ENCODE measurements at regions of chr17 and their contacts with region 1.

Region 1: DNA sequence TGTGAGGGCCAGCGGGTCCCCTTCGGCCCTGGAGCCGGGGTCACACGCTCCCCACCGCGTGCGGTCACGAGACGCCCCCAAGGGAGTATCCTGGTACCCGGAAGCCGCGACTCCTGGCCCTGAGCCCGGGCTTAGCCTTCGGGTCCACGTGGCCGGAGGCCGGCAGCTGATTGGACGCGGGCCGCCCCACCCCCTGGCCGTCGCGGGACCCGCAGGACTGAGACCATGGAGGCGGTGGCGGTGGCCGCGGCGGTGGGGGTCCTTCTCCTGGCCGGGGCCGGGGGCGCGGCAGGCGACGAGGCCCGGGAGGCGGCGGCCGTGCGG is at the start of gene NAGLU:
- DNase-seq: peak; percentile 55 to 87 (median 73)
- ATAC-seq: peak; percentile 75 to 79
- H3K4me3 Mint-ChIP-seq: peak within 1 kb of the TSS; percentile 77 to 91 (median 86)
- H3K27ac Mint-ChIP-seq: peak within 1 kb of the TSS; percentile 45 to 91 (median 83)
- H3K4me1 Mint-ChIP-seq: peaks cover 18 to 55% (median 50%) of the 10 kb centered on the region in 4 donors
- H3K27me3 Mint-ChIP-seq: no peaks in the 10 kb centered on the region
- polyA plus RNA-seq, gene NAGLU: 8.0 to 16.2 (median 13.4) TPM

Region 2: GRCh38 chr17:42548070-42548837 is 12.2 kb after region 1 on chr17:
- POLR2A ChIA-PET with region 1: interaction called, 16 read pairs
- DNase-seq: peak; percentile 42 to 87 (median 74)
- ATAC-seq: peak; percentile 90 to 97
- H3K4me3 Mint-ChIP-seq: peak overlapping the region; percentile 33 to 72 (median 50)
- H3K27ac Mint-ChIP-seq: peak overlapping the region in 3 of 10 donors; percentile 6 to 34 (median 7)
- H3K4me1 Mint-ChIP-seq: peaks cover 9 to 32% (median 21%) of the 10 kb centered on the region in 4 donors
- H3K27me3 Mint-ChIP-seq: no peaks in the 10 kb centered on the region

Region 3: DNA sequence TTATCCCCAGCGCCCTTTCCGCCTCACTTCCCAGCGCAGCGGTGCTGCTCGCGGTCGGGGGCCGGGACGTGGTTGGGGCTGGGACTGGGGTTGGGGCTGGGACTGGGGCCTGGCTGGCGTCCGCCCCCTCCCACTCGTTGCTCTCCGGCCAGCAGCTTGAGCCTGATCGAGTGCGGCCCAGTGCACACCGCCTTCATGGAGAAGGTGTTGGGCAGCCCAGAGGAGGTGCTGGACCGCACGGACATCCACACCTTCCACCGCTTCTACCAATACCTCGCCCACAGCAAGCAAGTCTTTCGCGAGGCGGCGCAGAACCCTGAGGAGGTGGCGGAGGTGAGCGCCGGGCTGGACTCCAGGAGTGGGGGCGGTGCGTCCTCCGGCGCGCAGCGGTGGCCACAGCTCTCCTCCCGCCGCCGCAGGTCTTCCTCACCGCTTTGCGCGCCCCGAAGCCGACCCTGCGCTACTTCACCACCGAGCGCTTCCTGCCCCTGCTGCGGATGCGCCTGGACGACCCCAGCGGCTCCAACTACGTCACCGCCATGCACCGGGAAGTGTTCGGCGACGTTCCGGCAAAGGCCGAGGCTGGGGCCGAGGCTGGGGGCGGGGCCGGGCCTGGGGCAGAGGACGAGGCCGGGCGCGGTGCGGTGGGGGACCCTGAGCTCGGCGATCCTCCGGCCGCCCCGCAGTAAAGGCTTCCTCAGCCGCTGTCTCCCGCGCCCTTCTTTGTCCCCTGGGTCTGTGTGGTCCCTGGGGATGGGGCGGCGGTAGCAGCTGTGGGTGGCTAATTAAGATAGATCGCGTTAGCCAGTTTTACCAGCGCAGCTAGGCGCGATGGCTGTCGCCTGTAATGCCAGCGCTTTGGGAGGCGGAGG is 18.5 kb after region 1 on chr17:
- POLR2A ChIA-PET with region 1: interaction called, 12 read pairs
- DNase-seq: peak; percentile 61 to 88 (median 74)
- ATAC-seq: peak; percentile 91 to 93
- H3K4me3 Mint-ChIP-seq: peak overlapping the region; percentile 84 to 95 (median 92)
- H3K27ac Mint-ChIP-seq: peak overlapping the region; percentile 83 to 96 (median 94)
- H3K4me1 Mint-ChIP-seq: peaks cover 11 to 51% (median 33%) of the 10 kb centered on the region in 4 donors
- H3K27me3 Mint-ChIP-seq: no peaks in the 10 kb centered on the region

Region 4: DNA sequence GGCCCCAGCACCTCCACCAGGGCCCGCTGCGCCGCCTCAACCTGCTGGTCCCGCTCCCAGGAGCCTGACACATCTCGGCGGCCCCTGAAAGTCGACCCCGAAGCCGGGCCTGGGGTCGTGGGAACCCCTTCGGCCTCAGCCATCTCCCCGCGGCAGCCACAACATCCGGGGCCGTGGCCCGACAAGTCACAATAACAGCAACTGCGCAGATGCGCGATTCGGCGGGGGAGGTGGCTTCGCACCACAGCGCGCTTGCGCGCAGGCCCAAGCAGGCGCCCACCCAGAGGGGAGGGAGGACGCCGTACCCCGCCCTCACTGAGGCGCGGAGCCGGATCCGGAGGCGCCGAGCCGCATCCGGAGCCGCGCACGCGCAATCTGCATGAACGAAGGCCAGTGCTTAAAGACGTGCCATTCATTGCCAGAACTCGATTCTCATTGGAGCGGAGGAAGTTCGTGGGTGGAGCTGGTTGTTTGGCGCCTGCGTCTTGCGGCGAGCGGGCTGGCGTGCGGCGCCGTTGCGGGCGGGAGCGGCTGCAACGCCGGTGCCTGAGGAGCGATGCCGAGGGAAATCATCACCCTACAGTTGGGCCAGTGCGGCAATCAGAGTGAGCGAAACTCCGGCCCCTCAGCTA is 73.3 kb after region 1 on chr17 and contains the starts of genes RETREG3 and TUBG1:
- POLR2A ChIA-PET with region 1: interaction called, 11 read pairs
- DNase-seq: peak; percentile 95 to 100 (median 99)
- ATAC-seq: peak; percentile 88 to 91
- H3K4me3 Mint-ChIP-seq: peak within 1 kb of the TSS; percentile 97 to 100 (median 100)
- H3K27ac Mint-ChIP-seq: peak within 1 kb of the TSS; percentile 94 to 100 (median 99)
- H3K4me1 Mint-ChIP-seq: peaks cover 25 to 54% (median 49%) of the 10 kb centered on the region in 4 donors
- H3K27me3 Mint-ChIP-seq: no peaks in the 10 kb centered on the region
- polyA plus RNA-seq, gene RETREG3: 119 to 131 (median 122) TPM
- polyA plus RNA-seq, gene TUBG1: 6.7 to 10.3 (median 7.8) TPM